ENCODE measurements at regions of chr14 and their contacts with region 1.

Region 1: DNA sequence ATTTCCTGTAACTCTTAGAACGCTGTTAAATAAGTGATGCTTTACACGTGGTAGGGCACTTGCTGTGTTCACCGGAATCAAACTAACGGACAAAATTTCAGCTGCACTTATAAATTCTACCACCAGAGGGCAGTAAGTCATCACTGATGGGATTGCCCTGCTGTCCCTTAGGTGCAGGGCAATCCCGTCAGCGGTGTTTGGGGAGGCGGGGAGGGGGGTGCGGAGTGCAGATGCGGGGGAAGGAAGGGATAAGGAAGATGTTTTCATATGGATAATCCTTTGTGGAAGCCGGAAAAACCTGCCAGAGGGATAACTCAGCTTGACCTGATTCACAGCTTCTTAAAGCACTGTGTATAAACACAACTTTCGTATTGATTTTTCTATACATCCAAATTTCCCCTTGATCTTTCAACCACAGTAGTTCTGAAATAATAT is 21.7 kb upstream of the SLC10A1 start:
- DNase-seq: peak; percentile 68
- H3K27ac ChIP-seq: no peak overlapping the region
- CTCF ChIP-seq: peak; percentile 81

Region 2: DNA sequence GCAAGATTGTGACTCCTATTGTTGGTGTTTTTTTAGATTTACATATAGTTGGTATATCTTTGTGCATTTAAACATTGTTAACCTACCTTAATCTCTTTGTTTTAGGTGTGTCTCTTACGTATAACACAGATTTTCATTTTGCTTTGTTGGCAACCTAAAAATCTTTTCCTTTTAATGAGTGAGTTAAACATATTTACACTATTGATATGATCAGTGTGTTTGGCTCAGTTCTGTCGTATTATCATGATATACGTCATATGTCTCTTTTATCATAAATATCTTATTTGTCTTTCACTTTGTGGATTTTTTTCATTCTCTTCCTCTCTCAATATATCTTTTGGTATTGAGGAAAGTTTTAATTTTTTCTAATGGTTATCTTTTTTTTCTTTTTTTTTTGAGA is 16.7 kb after region 1 on chr14:
- CTCF ChIA-PET with region 1: no interaction called
- POLR2A ChIA-PET with region 1: no interaction called
- DNase-seq: no peak
- H3K27ac ChIP-seq: no peak overlapping the region
- CTCF ChIP-seq: no peak

Region 3: DNA sequence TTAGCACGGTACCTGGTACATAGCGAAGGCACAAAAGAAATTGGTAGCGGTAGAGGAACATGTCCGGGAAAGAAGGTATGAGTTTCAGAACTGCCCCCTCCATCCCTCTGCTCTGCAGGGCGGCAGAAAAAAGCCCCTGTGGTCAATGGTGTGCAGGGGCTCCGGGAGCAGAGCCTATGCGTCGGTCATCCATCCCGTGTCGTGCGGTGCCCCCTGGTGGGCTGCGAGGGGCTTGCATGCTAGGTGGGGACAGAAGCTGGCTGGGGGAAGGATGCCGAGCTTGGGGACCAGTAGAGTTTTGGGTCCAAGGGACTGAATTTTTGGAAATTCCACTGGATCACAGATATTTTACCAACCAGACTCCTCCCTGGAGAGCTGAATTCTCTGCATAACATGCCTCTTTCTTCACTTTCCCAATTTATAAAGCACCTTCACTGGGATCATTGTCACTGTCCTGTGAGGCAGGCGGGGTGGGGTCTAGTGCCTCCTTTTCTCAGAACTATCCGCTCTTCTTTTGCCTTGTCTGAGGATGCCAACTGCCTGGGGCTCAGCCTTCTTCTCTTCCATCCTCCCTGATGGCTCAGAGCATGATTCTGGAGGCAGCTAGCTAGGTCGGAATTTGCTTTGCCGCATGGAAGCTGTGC is 209.1 kb after region 1 on chr14:
- CTCF ChIA-PET with region 1: interaction called, 44 read pairs
- POLR2A ChIA-PET with region 1: no interaction called
- DNase-seq: peak; percentile 73
- H3K27ac ChIP-seq: no peak overlapping the region
- CTCF ChIP-seq: peak; percentile 85

Region 4: GRCh38 chr14:70073924-70074566 is 255.3 kb after region 1 on chr14:
- CTCF ChIA-PET with region 1: interaction called, 16 read pairs
- POLR2A ChIA-PET with region 1: no interaction called
- DNase-seq: peak; percentile 75
- H3K27ac ChIP-seq: no peak overlapping the region
- CTCF ChIP-seq: peak; percentile 79

Measured in RWPE1 (cell line).